ENCODE measurements at regions of chr14 and their contacts with region 1.

Region 1: DNA sequence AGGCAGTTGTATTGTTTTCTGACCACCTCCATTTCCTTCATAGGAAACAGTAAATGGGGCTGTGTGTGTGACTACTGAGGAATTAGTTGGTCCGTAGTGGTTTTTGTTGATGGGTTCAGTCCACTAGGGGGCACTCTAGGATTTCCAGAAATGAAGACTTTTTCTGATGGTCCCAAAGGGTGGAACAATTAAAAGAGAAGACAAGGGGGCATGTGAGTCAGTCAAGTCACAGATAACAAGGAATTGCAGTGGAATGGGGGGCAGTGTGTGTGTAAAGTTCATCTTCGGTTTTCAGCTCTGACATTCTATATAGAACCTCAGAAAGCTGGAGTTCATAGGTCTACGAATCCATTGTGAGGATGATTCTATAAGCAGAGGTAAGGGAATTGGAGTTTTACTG is 186.6 kb upstream of the OR4E1 start:
- DNase-seq: peak in 4 of 5 donors; percentile 47 to 55 (median 52)
- H3K4me3 ChIP-seq: no peak overlapping the region
- H3K4me3 Mint-ChIP-seq: peak overlapping the region; percentile 49 to 82 (median 72)
- H3K27ac ChIP-seq: peak overlapping the region; percentile 2
- H3K27ac Mint-ChIP-seq: peak overlapping the region; percentile 4 to 92 (median 74)
- H3K4me1 ChIP-seq: peaks cover 8% of the 10 kb centered on the region
- H3K4me1 Mint-ChIP-seq: peaks cover 5 to 20% (median 12%) of the 10 kb centered on the region in 4 donors
- H3K27me3 ChIP-seq: no peaks in the 10 kb centered on the region
- H3K27me3 Mint-ChIP-seq: peaks cover 2 to 3% of the 10 kb centered on the region in 2 donors

Region 2: DNA sequence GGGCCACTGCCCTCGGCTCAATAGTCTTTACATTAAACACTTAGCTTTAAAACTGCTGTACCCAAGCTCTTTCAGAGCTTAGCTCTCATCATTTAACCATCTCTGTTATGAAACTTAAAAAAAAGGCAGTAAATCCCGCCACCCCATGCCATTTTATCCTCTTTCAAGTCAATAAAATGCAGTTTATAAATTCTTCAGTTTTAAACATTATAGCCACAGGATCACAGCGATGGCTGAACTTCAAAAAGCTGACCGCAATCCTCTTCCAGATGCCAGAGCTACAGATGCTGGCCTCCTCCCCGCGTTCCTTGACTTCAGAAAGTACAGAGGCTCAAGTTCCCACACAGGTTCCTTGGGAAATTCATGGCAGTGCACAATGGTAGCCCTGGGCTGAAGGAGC is 284.5 kb before region 1 on chr14:
- CTCF ChIA-PET with region 1: no interaction called
- POLR2A ChIA-PET with region 1: no interaction called
- intact Hi-C with region 1: no loop called
- DNase-seq: no peak
- H3K4me3 ChIP-seq: no peak overlapping the region
- H3K4me3 Mint-ChIP-seq: no peak overlapping the region
- H3K27ac ChIP-seq: no peak overlapping the region
- H3K27ac Mint-ChIP-seq: peak overlapping the region in 1 of 7 donors; percentile 64
- H3K4me1 ChIP-seq: no peaks in the 10 kb centered on the region
- H3K4me1 Mint-ChIP-seq: no peaks in the 10 kb centered on the region
- H3K27me3 ChIP-seq: no peaks in the 10 kb centered on the region
- H3K27me3 Mint-ChIP-seq: peaks cover 15 to 20% of the 10 kb centered on the region in 2 donors

Region 3: DNA sequence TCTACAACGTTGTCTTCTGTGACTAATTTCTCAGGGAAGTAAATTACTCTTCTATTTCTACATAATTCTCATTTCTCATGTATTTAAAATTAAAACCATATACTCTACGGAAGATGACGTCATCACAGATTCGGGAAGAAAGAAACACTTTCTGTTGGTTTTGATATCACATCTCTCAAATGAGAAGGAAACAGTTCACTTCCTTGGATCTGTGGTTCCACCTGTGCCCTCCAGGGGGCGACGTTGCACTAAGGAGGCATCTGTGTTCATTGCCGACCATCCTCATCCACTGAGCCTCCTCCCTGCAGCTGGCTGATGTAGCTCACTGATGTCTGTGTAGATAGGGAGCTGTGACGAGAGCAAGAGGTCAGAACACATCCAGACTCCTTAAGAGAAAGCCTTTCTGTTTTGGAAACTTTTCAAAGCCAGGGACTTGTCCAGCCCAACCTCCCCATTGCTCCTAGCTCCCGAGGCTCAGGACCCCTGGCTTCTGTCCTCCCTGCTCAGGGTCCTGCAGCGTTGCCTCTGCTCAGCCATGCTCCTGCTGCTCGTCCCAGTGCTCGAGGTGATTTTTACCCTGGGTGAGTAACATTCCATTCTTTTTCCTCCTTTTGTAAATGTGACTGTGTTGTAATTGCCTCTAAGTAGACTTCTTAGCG is 13.8 kb before region 1 on chr14:
- CTCF ChIA-PET with region 1: interaction called, 41 read pairs
- POLR2A ChIA-PET with region 1: interaction called, 62 read pairs
- intact Hi-C with region 1: loop called (anchors 2 kb)
- DNase-seq: peak; percentile 61 to 71 (median 64)
- H3K4me3 ChIP-seq: peak overlapping the region in 1 of 2 donors; percentile 39
- H3K4me3 Mint-ChIP-seq: peak overlapping the region; percentile 86 to 93 (median 90)
- H3K27ac ChIP-seq: peak overlapping the region; percentile 55
- H3K27ac Mint-ChIP-seq: peak overlapping the region; percentile 54 to 91 (median 88)
- H3K4me1 ChIP-seq: peaks cover under 1% of the 10 kb centered on the region
- H3K4me1 Mint-ChIP-seq: peaks cover 1 to 13% (median 6%) of the 10 kb centered on the region in 4 donors
- H3K27me3 ChIP-seq: no peaks in the 10 kb centered on the region
- H3K27me3 Mint-ChIP-seq: peaks cover 17 to 25% of the 10 kb centered on the region in 2 donors

Region 4: GRCh38 chr14:22829661-22830442 is 969.7 kb after region 1 on chr14 and contains the start of gene MRPL52:
- CTCF ChIA-PET with region 1: no interaction called
- POLR2A ChIA-PET with region 1: no interaction called
- intact Hi-C with region 1: no loop called
- DNase-seq: peak; percentile 86 to 93 (median 88)
- H3K4me3 ChIP-seq: peak within 1 kb of the TSS; percentile 80 to 85
- H3K4me3 Mint-ChIP-seq: peak within 1 kb of the TSS; percentile 91 to 96 (median 92)
- H3K27ac ChIP-seq: peak within 1 kb of the TSS; percentile 85
- H3K27ac Mint-ChIP-seq: peak within 1 kb of the TSS; percentile 96 to 99 (median 98)
- H3K4me1 ChIP-seq: peaks cover 18% of the 10 kb centered on the region
- H3K4me1 Mint-ChIP-seq: peaks cover 17 to 32% (median 24%) of the 10 kb centered on the region in 4 donors
- H3K27me3 ChIP-seq: no peaks in the 10 kb centered on the region
- H3K27me3 Mint-ChIP-seq: peaks cover 0 to 1% of the 10 kb centered on the region in 2 donors
- total RNA-seq, gene MRPL52: 58.0 to 68.3 TPM